Left ventricle myocardium inferior (tissue), 1 donor: ENCODE measurements at regions of chr5 and their contacts with region 1.

Region 1: GRCh38 chr5:178075840-178076548 is 37.3 kb upstream of the N4BP3 start:
- DNase-seq: peak; percentile 60
- H3K4me3 ChIP-seq: peak overlapping the region; percentile 23
- H3K27ac ChIP-seq: no peak overlapping the region
- H3K4me1 ChIP-seq: peaks cover 6% of the 10 kb centered on the region
- H3K27me3 ChIP-seq: peaks cover 61% of the 10 kb centered on the region
- CTCF ChIP-seq: peak; percentile 91

Region 2: GRCh38 chr5:178163772-178164735 is 88.1 kb after region 1 on chr5:
- intact Hi-C with region 1: loop called (anchors 2 kb)
- DNase-seq: peak; percentile 79
- H3K4me3 ChIP-seq: peak overlapping the region; percentile 30
- H3K27ac ChIP-seq: no peak overlapping the region
- H3K4me1 ChIP-seq: peaks cover 8% of the 10 kb centered on the region
- H3K27me3 ChIP-seq: peaks cover 57% of the 10 kb centered on the region
- CTCF ChIP-seq: peak; percentile 100